A549 (cell line): ENCODE measurements at regions of chr2 and their contacts with region 1.

Region 1: GRCh38 chr2:177281400-177282180 is 17.1 kb upstream of the NFE2L2 start:
- DNase-seq: no peak
- ATAC-seq: peak in 1 of 2 experiments; percentile 28; a peak in 2 of 6 replicates
- H3K4me3 ChIP-seq: no peak overlapping the region
- H3K27ac ChIP-seq: peak overlapping the region in 1 of 2 experiments; percentile 50; a peak in 2 of 6 replicates
- H3K4me1 ChIP-seq: peaks cover 12% of the 10 kb centered on the region; the same call in 2 of the 3 replicates
- CTCF ChIP-seq: no peak
- EP300 ChIP-seq: no peak
- POLR2A ChIP-seq: no peak
- RAD21 ChIP-seq: no peak

Region 2: GRCh38 chr2:177296040-177296439 is 14.4 kb after region 1 on chr2:
- CTCF ChIA-PET with region 1: interaction called, 11 read pairs
- POLR2A ChIA-PET with region 1: no interaction called
- DNase-seq: peak; percentile 22 to 32
- ATAC-seq: peak; percentile 43 to 71; a peak in 4 of 6 replicates
- H3K4me3 ChIP-seq: no peak overlapping the region
- H3K27ac ChIP-seq: peak overlapping the region in 1 of 2 experiments; percentile 39; a peak in 2 of 6 replicates
- H3K4me1 ChIP-seq: peaks cover 8% of the 10 kb centered on the region
- CTCF ChIP-seq: peak; percentile 66
- EP300 ChIP-seq: no peak
- POLR2A ChIP-seq: no peak
- RAD21 ChIP-seq: peak; percentile 61 to 74